Heart right ventricle (tissue), 16 donors: ENCODE measurements at regions of chr1 and their contacts with region 1.

Region 1: GRCh38 chr1:98053471-98054366 is 132.9 kb upstream of the DPYD start:
- DNase-seq: peak; percentile 18 to 65
- ATAC-seq: peak; percentile 92 to 99 (median 96)
- H3K4me3 ChIP-seq: peak overlapping the region; percentile 7 to 59 (median 55)
- H3K27ac ChIP-seq: no peak overlapping the region
- H3K4me1 ChIP-seq: peaks cover 0 to 20% (median 12%) of the 10 kb centered on the region in 9 donors
- H3K27me3 ChIP-seq: peaks cover 0 to 96% (median 83%) of the 10 kb centered on the region in 7 donors
- CTCF ChIP-seq: peak; percentile 83 to 97 (median 89)

Region 2: GRCh38 chr1:96236156-96236739 is 1817.5 kb before region 1 on chr1:
- intact Hi-C with region 1: loop called in 2 of 10 experiments (anchors 10 kb)
- DNase-seq: peak in 1 of 2 donors; percentile 16
- ATAC-seq: no peak
- H3K4me3 ChIP-seq: no peak overlapping the region
- H3K27ac ChIP-seq: no peak overlapping the region
- H3K4me1 ChIP-seq: no peaks in the 10 kb centered on the region
- H3K27me3 ChIP-seq: no peaks in the 10 kb centered on the region
- CTCF ChIP-seq: peak in 8 of 9 donors; percentile 18 to 67 (median 56)

Region 3: GRCh38 chr1:97137862-97138514 is 915.7 kb before region 1 on chr1:
- intact Hi-C with region 1: loop called in 4 of 10 experiments (anchors 5 to 10 kb)
- DNase-seq: peak in 1 of 2 donors; percentile 63
- ATAC-seq: peak; percentile 83 to 98 (median 92)
- H3K4me3 ChIP-seq: peak overlapping the region in 6 of 10 donors; percentile 1 to 45 (median 29)
- H3K27ac ChIP-seq: peak overlapping the region in 3 of 10 donors; percentile 27 to 54 (median 33)
- H3K4me1 ChIP-seq: peaks cover 0 to 15% (median 8%) of the 10 kb centered on the region in 9 donors
- H3K27me3 ChIP-seq: no peaks in the 10 kb centered on the region
- CTCF ChIP-seq: peak; percentile 41 to 77 (median 68)

Region 4: DNA sequence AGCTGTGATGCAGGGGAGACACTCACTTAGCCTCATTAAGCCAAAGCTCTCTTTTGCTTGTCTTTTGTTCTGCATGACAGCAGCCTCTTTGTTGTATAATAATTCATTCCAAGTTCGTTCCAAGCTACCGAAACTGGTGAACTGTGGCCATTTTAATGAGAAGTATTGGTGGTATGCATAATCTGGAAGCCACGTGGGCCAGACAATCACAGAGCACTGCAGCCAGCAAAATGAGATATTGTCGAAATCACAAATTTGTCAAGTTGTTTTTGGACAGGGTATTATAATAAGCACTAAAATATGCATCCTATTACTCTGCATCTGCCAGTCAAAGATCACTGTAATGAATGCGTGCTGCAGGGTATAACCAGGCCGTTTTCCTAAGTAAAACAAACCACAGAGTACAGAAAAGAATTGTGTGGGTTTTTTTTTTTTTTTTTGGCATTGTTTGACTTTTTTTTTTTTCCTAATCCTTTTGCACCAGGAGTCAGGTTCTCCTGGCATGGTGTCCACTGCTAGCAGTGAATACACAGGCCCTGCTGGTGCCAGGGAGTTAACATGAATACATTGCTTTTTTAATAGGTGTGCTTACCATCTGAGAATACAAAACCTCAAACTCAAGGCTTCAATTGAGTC is 908.3 kb before region 1 on chr1:
- intact Hi-C with region 1: loop called in 2 of 10 experiments (anchors 10 kb)
- DNase-seq: no peak
- ATAC-seq: no peak
- H3K4me3 ChIP-seq: no peak overlapping the region
- H3K27ac ChIP-seq: no peak overlapping the region
- H3K4me1 ChIP-seq: no peaks in the 10 kb centered on the region
- H3K27me3 ChIP-seq: no peaks in the 10 kb centered on the region
- CTCF ChIP-seq: no peak

Region 5: DNA sequence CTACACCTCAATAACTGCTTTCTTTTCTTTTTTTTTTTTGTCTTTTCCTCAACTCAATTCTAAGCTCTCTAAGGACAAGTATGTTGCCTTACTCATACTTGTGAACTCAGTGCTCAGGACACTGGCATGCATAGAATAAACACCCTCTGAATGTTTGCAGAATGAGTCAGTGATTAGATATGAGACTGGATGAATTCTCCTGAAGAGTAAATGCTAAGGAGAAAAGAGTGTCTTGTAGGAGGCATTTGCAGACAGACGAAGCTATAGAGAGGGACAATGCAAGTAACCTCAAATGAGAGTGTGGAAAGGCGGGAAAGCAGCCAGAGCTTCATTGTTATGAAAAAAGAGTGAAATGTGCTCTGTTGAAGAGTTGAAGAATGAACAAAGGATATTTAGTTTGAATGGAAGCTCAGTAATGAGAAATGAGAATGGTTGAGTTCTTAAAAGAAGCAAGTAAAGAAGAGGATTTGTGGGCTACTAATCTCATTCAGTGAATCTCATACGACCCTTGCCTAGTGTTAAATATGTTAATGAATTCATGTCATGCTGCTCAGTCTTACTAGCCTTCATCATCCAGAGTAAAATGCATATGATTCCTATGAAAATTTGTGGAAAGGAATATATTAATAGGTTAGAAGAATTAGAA is 33.2 kb after region 1 on chr1:
- intact Hi-C with region 1: no loop called
- DNase-seq: no peak
- ATAC-seq: no peak
- H3K4me3 ChIP-seq: no peak overlapping the region
- H3K27ac ChIP-seq: no peak overlapping the region
- H3K4me1 ChIP-seq: no peaks in the 10 kb centered on the region
- H3K27me3 ChIP-seq: no peaks in the 10 kb centered on the region
- CTCF ChIP-seq: no peak